Gastrocnemius medialis (tissue), 4 donors: ENCODE measurements at regions of chr19 and their contacts with region 1.

Region 1: GRCh38 chr19:7145494-7146485 is 76.3 kb downstream of the ZNF557 start:
- DNase-seq: no peak
- ATAC-seq: no peak
- H3K4me3 ChIP-seq: no peak overlapping the region
- H3K27ac ChIP-seq: peak overlapping the region; percentile 52 to 85 (median 68)
- H3K4me1 ChIP-seq: peaks cover 8 to 27% of the 10 kb centered on the region in 2 donors
- H3K27me3 ChIP-seq: no peaks in the 10 kb centered on the region
- CTCF ChIP-seq: no peak
- POLR2A ChIP-seq: no peak

Region 2: GRCh38 chr19:7083076-7083956 is 62.5 kb before region 1 on chr19:
- in situ Hi-C with region 1: no loop called
- intact Hi-C with region 1: no loop called
- DNase-seq: no peak
- ATAC-seq: no peak
- H3K4me3 ChIP-seq: peak overlapping the region in 2 of 4 donors; percentile 3 to 10
- H3K27ac ChIP-seq: no peak overlapping the region
- H3K4me1 ChIP-seq: no peaks in the 10 kb centered on the region
- H3K27me3 ChIP-seq: no peaks in the 10 kb centered on the region
- CTCF ChIP-seq: no peak
- POLR2A ChIP-seq: no peak

Region 3: GRCh38 chr19:7104747-7105447 is 40.9 kb before region 1 on chr19:
- in situ Hi-C with region 1: no loop called
- intact Hi-C with region 1: loop called (anchors 5 kb)
- DNase-seq: no peak
- ATAC-seq: no peak
- H3K4me3 ChIP-seq: no peak overlapping the region
- H3K27ac ChIP-seq: no peak overlapping the region
- H3K4me1 ChIP-seq: peaks cover 0 to 1% of the 10 kb centered on the region in 2 donors
- H3K27me3 ChIP-seq: no peaks in the 10 kb centered on the region
- CTCF ChIP-seq: no peak
- POLR2A ChIP-seq: no peak

Region 4: GRCh38 chr19:7177926-7178325 is 32.1 kb after region 1 on chr19:
- in situ Hi-C with region 1: no loop called
- intact Hi-C with region 1: loop called (anchors 5 kb)
- DNase-seq: no peak
- ATAC-seq: no peak
- H3K4me3 ChIP-seq: no peak overlapping the region
- H3K27ac ChIP-seq: peak overlapping the region; percentile 83 to 89 (median 84)
- H3K4me1 ChIP-seq: peaks cover 49 to 64% of the 10 kb centered on the region in 2 donors
- H3K27me3 ChIP-seq: no peaks in the 10 kb centered on the region
- CTCF ChIP-seq: no peak
- POLR2A ChIP-seq: no peak

Region 5: DNA sequence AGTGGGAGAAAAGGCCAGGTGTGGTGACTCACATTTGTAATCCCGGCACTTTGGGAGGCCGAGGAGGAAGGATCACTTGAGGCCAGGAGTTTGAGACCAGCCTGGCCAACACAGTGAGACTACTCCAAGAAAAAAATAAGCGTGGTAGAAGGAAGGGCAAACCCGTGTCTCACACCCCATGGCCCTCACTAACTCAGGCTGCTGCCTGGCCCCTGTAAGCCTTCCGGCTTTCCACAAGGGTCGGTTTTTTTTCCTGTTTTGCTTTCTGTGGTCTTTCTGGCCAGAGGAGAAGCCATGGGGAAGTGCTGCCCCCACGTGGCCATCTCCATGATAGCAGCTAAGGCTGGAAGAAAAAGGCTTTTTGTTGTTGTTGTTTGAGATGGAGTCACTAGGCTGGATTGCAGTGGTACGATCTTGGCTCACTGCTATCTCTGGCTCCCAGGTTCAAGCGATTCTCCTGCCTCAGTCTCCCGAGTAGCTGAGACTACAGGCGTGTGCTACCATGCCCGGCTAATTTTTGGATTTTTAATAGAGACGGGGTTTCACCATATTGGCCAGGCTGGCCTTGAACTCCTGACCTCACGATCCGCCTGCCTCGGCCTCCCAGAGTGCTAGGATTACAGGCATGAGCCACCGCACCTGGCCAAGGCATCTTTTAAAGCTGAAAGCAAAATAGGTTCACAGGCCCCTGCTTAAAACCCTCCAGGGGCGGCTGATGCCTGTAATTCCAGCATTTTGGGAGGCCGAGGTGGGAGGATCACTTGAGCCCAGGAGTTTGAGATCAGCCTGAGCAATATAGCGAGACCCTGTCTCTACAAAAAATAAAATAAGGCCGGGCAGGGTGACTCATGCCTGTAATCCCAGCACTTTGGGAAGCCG is 195.4 kb after region 1 on chr19:
- in situ Hi-C with region 1: loop called in 1 of 4 experiments (anchors 10 kb)
- intact Hi-C with region 1: loop called (anchors 2 kb)
- DNase-seq: peak; percentile 43 to 57
- ATAC-seq: peak; percentile 39 to 58
- H3K4me3 ChIP-seq: no peak overlapping the region
- H3K27ac ChIP-seq: no peak overlapping the region
- H3K4me1 ChIP-seq: no peaks in the 10 kb centered on the region
- H3K27me3 ChIP-seq: no peaks in the 10 kb centered on the region
- CTCF ChIP-seq: peak; percentile 91 to 97 (median 95)
- POLR2A ChIP-seq: no peak